ENCODE measurements at regions of chr12 and their contacts with region 1.

Region 1: GRCh38 chr12:2583091-2583497 is 211.7 kb upstream of the FKBP4 start:
- DNase-seq: no peak
- ATAC-seq: peak; percentile 99
- H3K4me3 ChIP-seq: no peak overlapping the region
- H3K27ac ChIP-seq: no peak overlapping the region
- H3K4me1 ChIP-seq: no peaks in the 10 kb centered on the region
- H3K27me3 ChIP-seq: peaks cover 2 to 4% of the 10 kb centered on the region in 2 experiments
- CTCF ChIP-seq: peak; percentile 71 to 87 (median 73)
- EP300 ChIP-seq: no peak
- POLR2A ChIP-seq: no peak
- RAD21 ChIP-seq: peak; percentile 74

Region 2: DNA sequence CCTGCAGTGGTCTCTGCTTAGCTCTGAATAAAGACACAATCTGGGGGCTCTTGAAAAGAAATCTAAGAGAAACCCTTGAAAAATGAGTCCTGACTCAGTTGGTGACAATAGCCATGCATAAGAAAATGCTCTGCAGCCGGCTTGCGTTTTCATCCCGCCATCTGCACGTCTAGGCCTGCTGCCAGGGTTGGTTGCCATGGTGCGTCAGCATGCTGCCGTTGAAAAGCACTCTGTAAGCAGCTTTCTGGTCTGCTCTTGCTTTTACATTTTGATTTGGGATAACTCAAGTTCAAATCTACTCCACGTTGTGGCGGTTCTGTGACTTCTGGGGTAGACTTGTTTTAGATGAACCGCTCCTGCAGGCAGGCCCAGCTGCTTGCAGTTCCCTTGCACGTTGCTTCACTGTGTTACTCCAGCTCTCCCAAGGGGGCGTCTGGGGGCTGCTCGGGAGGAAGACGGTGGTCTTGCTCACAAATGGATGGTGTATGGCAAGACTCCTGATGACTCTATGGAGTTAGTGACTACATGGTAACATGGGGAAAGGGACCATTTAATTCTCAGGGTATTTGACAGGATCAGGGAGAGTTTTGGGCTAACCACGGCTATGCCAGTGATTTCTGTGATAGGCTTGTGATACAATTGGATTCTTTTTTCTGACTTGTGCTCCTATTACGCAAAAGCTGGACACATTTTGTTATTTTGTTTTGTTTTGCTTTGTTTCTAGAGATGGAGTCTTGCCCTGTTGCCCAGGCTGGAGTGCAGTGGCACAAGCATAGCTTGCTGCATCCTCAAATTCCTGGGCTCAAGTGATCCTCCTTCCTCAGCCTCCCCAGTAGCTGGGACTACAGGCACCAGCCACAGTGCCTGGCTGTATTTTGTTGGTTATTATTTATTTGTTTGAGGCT is 938.3 kb before region 1 on chr12:
- CTCF ChIA-PET with region 1: no interaction called
- POLR2A ChIA-PET with region 1: no interaction called
- RAD21 ChIA-PET with region 1: no interaction called
- SMC1A ChIA-PET with region 1: no interaction called
- in situ Hi-C with region 1: loop called (anchors 10 kb)
- intact Hi-C with region 1: no loop called
- DNase-seq: no peak
- ATAC-seq: no peak
- H3K4me3 ChIP-seq: no peak overlapping the region
- H3K27ac ChIP-seq: no peak overlapping the region
- H3K4me1 ChIP-seq: no peaks in the 10 kb centered on the region
- H3K27me3 ChIP-seq: no peaks in the 10 kb centered on the region
- CTCF ChIP-seq: no peak
- EP300 ChIP-seq: no peak
- POLR2A ChIP-seq: no peak
- RAD21 ChIP-seq: no peak

Region 3: GRCh38 chr12:2057041-2057794 is 525.9 kb before region 1 on chr12:
- CTCF ChIA-PET with region 1: interaction called, 3 read pairs
- POLR2A ChIA-PET with region 1: no interaction called
- RAD21 ChIA-PET with region 1: no interaction called
- SMC1A ChIA-PET with region 1: no interaction called
- in situ Hi-C with region 1: loop called (anchors 10 kb)
- intact Hi-C with region 1: loop called (anchors 5 kb)
- DNase-seq: no peak
- ATAC-seq: peak; percentile 67
- H3K4me3 ChIP-seq: no peak overlapping the region
- H3K27ac ChIP-seq: no peak overlapping the region
- H3K4me1 ChIP-seq: no peaks in the 10 kb centered on the region
- H3K27me3 ChIP-seq: peaks cover 9 to 14% of the 10 kb centered on the region in 2 experiments; a peak in 3 of 4 replicates
- CTCF ChIP-seq: peak; percentile 59 to 70 (median 61)
- EP300 ChIP-seq: no peak
- POLR2A ChIP-seq: no peak
- RAD21 ChIP-seq: peak; percentile 66

Region 4: GRCh38 chr12:2291182-2291832 is 291.8 kb before region 1 on chr12:
- CTCF ChIA-PET with region 1: interaction called, 4 read pairs
- POLR2A ChIA-PET with region 1: no interaction called
- RAD21 ChIA-PET with region 1: no interaction called
- SMC1A ChIA-PET with region 1: interaction called, 3 read pairs
- in situ Hi-C with region 1: no loop called
- intact Hi-C with region 1: loop called (anchors 10 kb)
- DNase-seq: no peak
- ATAC-seq: peak; percentile 90
- H3K4me3 ChIP-seq: no peak overlapping the region
- H3K27ac ChIP-seq: no peak overlapping the region
- H3K4me1 ChIP-seq: peaks cover 14% of the 10 kb centered on the region
- H3K27me3 ChIP-seq: no peaks in the 10 kb centered on the region
- CTCF ChIP-seq: peak; percentile 60 to 77 (median 73)
- EP300 ChIP-seq: no peak
- POLR2A ChIP-seq: no peak
- RAD21 ChIP-seq: peak; percentile 55

Region 5: GRCh38 chr12:2358986-2359658 is 224.0 kb before region 1 on chr12:
- CTCF ChIA-PET with region 1: interaction called, 5 read pairs
- POLR2A ChIA-PET with region 1: no interaction called
- RAD21 ChIA-PET with region 1: no interaction called
- SMC1A ChIA-PET with region 1: no interaction called
- in situ Hi-C with region 1: no loop called
- intact Hi-C with region 1: loop called (anchors 1 kb)
- DNase-seq: no peak
- ATAC-seq: peak; percentile 44
- H3K4me3 ChIP-seq: 0 out of 2 replicates have a peak overlapping the region, but pooled peaks have one; percentile 23
- H3K27ac ChIP-seq: no peak overlapping the region
- H3K4me1 ChIP-seq: peaks cover 23% of the 10 kb centered on the region
- H3K27me3 ChIP-seq: no peaks in the 10 kb centered on the region
- CTCF ChIP-seq: peak in 2 of 3 experiments; percentile 18 to 30; a peak in 3 of 6 replicates
- EP300 ChIP-seq: no peak
- POLR2A ChIP-seq: no peak
- RAD21 ChIP-seq: peak; percentile 19; the same call in 1 of the 2 replicates